Activated CD4-positive, alpha-beta T cell treated with anti-CD3 and anti-CD28 coated beads for 36 hours (primary cell): ENCODE measurements at regions of chr7 and their contacts with region 1.

Region 1: DNA sequence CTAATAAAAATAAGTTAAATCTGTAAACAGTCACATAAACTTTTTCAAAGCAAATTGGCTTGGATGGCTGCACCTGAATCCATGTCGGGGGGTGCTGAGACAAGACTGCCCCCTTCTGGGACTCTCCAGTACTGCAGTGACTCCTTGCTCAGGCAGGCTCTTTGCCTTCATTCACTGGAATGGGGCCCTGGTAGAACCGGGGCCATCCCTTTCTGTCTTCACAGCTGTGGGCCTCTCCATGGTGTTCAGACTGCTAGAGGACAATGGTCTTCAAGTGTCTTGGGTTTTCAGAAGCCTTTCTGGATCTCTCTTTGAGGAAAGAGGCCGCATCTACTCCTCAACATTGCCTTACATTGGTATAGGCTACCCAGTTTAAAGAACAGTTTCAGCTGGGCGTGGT is 16.1 kb upstream of the IMPDH1 start:
- DNase-seq: peak; percentile 91
- ATAC-seq: peak; percentile 82
- H3K4me3 Mint-ChIP-seq: no peak overlapping the region
- H3K27ac Mint-ChIP-seq: no peak overlapping the region
- H3K4me1 Mint-ChIP-seq: no peaks in the 10 kb centered on the region
- H3K27me3 Mint-ChIP-seq: peaks cover 12% of the 10 kb centered on the region

Region 2: GRCh38 chr7:128398016-128398840 is 27.6 kb before region 1 on chr7:
- CTCF ChIA-PET with region 1: interaction called, 89 read pairs
- POLR2A ChIA-PET with region 1: no interaction called
- intact Hi-C with region 1: loop called (anchors 1 kb)
- DNase-seq: peak; percentile 65
- ATAC-seq: peak; percentile 59
- H3K4me3 Mint-ChIP-seq: no peak overlapping the region
- H3K27ac Mint-ChIP-seq: no peak overlapping the region
- H3K4me1 Mint-ChIP-seq: peaks cover 5% of the 10 kb centered on the region
- H3K27me3 Mint-ChIP-seq: no peaks in the 10 kb centered on the region

Region 3: GRCh38 chr7:128437426-128438332 is 11.8 kb after region 1 on chr7:
- CTCF ChIA-PET with region 1: interaction called, 66 read pairs
- POLR2A ChIA-PET with region 1: no interaction called
- intact Hi-C with region 1: no loop called
- DNase-seq: no peak
- ATAC-seq: no peak
- H3K4me3 Mint-ChIP-seq: no peak overlapping the region
- H3K27ac Mint-ChIP-seq: no peak overlapping the region
- H3K4me1 Mint-ChIP-seq: no peaks in the 10 kb centered on the region
- H3K27me3 Mint-ChIP-seq: peaks cover 3% of the 10 kb centered on the region

Region 4: GRCh38 chr7:128450409-128450808 is 24.6 kb after region 1 on chr7:
- CTCF ChIA-PET with region 1: interaction called, 87 read pairs
- POLR2A ChIA-PET with region 1: interaction called, 3 read pairs
- intact Hi-C with region 1: no loop called
- DNase-seq: no peak
- ATAC-seq: peak; percentile 42
- H3K4me3 Mint-ChIP-seq: peak overlapping the region; percentile 29
- H3K27ac Mint-ChIP-seq: peak overlapping the region; percentile 73
- H3K4me1 Mint-ChIP-seq: peaks cover 61% of the 10 kb centered on the region
- H3K27me3 Mint-ChIP-seq: peaks cover 8% of the 10 kb centered on the region

Region 5: DNA sequence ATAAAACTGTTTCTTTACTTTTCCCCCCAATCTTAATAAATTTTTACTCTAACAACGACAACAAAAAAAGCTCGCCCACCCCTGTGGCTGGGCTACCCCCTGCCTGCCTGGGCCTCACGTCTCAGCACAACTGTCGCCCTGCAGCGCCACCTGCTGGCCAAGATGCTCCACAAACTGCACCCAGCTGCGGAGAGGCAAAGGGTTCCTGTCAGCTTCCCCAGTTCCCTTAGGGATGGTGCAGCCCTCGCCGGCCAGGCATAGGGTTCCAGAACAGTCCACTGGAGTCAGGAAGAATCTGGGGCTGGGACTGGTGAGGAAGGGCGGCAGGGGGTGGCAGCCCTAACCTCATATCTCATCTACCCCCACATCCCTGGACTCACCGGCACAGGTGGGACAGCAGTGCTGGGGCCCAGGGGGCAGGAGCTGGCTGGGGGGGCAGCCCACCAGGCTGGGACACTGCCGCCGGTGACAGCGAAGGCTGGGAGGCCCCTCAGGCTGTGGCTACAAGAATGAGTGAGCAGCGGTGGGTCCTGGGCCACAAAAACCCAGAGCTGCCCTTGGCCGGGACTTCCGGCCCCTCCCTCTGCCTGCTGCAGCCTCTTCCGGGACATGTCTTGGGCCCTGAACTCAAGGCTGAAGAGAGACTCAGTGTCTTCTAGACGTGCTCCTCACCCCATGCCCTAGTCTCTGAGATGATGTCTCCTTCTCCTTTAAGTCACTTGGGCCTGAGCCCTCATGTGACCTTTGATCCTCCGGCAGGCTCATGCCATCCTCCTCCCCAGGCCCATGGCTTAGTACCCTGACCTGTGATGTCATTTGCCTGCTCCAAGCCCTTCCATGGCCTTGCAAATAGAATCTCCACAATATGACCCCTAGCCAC is 458.0 kb after region 1 on chr7:
- CTCF ChIA-PET with region 1: interaction called, 3 read pairs
- POLR2A ChIA-PET with region 1: no interaction called
- intact Hi-C with region 1: loop called in 1 of 2 experiments (anchors 2 kb)
- DNase-seq: peak; percentile 92
- ATAC-seq: peak; percentile 82
- H3K4me3 Mint-ChIP-seq: no peak overlapping the region
- H3K27ac Mint-ChIP-seq: no peak overlapping the region
- H3K4me1 Mint-ChIP-seq: no peaks in the 10 kb centered on the region
- H3K27me3 Mint-ChIP-seq: peaks cover 2% of the 10 kb centered on the region